Ascending aorta (tissue), 2 donors: ENCODE measurements at regions of chr12 and their contacts with region 1.

Region 1: GRCh38 chr12:125183187-125184067 is 118.2 kb downstream of the AACS start:
- DNase-seq: peak in 1 of 2 donors; percentile 80
- H3K4me3 ChIP-seq: peak overlapping the region in 1 of 2 donors; percentile 30
- H3K27ac ChIP-seq: no peak overlapping the region
- H3K4me1 ChIP-seq: peaks cover 0 to 14% of the 10 kb centered on the region in 2 donors
- H3K27me3 ChIP-seq: peaks cover 2% of the 10 kb centered on the region
- CTCF ChIP-seq: peak; percentile 87 to 100 (median 100)

Region 2: GRCh38 chr12:125330645-125331341 is 147.4 kb after region 1 on chr12:
- intact Hi-C with region 1: loop called (anchors 10 kb)
- DNase-seq: peak in 1 of 2 donors; percentile 72
- H3K4me3 ChIP-seq: peak overlapping the region; percentile 45 to 65
- H3K27ac ChIP-seq: no peak overlapping the region
- H3K4me1 ChIP-seq: peaks cover 0 to 6% of the 10 kb centered on the region in 2 donors
- H3K27me3 ChIP-seq: no peaks in the 10 kb centered on the region
- CTCF ChIP-seq: peak; percentile 61 to 93 (median 83)

Region 3: DNA sequence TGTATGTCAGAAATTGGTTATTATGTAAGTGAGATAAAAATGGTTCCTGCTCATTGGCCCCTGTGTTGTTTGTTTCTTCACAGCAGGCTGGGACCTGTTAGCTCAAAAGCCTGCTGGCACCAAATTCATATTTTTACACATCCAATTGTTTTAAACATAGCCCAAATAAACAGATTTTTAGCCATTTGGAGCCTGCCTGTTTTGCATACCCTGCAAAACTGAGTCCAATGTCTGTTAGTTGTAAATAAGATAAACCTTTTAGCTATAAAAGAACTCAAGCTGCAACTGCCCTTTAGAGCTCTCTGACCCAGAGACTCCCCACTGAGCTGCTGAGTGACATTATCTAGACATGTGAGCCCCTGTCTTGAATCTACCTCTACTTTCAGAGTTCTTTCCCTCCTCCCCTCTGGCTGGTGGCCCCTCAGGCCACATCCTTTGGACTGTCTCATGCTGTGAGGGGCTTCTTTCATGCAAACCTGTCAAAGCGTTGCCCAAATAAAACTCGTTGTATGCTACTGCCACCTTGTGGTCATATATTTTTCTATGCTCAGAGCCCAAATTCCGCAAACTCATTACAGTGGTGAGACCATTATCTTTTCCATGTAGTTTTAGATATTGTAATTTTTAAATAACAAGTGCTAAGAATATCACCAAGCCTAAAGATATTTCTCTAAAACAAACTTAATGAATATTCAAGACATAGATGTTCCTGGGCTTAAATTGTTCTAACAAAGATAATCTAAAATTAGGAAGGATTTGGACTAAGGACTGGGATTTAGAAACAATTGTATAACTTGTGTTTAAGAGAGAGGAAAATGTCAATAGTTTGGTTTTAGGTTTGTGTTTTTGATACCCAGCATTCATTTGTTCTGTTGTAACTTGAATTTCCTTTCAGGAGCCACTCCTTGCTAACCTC is 219.7 kb after region 1 on chr12:
- intact Hi-C with region 1: loop called (anchors 2 kb)
- DNase-seq: no peak
- H3K4me3 ChIP-seq: no peak overlapping the region
- H3K27ac ChIP-seq: no peak overlapping the region
- H3K4me1 ChIP-seq: no peaks in the 10 kb centered on the region
- H3K27me3 ChIP-seq: no peaks in the 10 kb centered on the region
- CTCF ChIP-seq: peak; percentile 8 to 36 (median 15)

Region 4: GRCh38 chr12:126747530-126748149 is 1564.2 kb after region 1 on chr12:
- intact Hi-C with region 1: loop called (anchors 2 kb)
- DNase-seq: no peak
- H3K4me3 ChIP-seq: no peak overlapping the region
- H3K27ac ChIP-seq: no peak overlapping the region
- H3K4me1 ChIP-seq: no peaks in the 10 kb centered on the region
- H3K27me3 ChIP-seq: no peaks in the 10 kb centered on the region
- CTCF ChIP-seq: peak; percentile 47 to 84 (median 76)

Region 5: DNA sequence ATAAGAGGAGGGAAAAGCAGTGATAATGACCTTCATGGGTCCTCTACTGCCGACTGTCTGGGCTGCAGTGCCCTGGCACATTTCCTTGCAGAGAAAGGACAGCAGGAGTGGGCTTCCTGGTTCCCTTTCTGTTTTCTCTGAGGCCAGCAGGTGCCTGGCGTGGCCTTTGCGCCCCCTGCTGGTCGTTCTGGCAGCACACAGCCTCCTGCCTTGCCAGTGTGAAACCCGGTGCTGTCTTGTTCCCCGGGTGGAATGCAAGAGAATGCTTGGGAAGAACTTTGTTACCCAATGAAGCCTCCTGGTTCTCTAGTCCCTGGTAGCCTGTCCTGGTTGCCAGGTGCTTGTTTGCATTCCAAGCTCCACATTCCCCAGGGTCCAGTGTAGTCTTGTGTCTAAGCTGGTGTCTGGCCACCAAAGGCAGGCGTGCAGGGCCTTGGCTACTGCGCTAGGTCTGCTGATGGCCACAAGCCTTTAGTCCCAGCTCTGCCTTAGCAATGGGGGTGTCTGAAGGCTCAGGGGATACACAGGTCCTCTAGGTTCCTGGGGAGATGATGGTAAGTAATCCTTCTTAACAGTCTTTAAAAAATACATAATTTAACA is 1691.1 kb after region 1 on chr12:
- intact Hi-C with region 1: loop called (anchors 2 kb)
- DNase-seq: no peak
- H3K4me3 ChIP-seq: no peak overlapping the region
- H3K27ac ChIP-seq: no peak overlapping the region
- H3K4me1 ChIP-seq: no peaks in the 10 kb centered on the region
- H3K27me3 ChIP-seq: no peaks in the 10 kb centered on the region
- CTCF ChIP-seq: peak; percentile 31 to 81 (median 58)